Panc1 (cell line): ENCODE measurements at regions of chr5 and their contacts with region 1.

Region 1: DNA sequence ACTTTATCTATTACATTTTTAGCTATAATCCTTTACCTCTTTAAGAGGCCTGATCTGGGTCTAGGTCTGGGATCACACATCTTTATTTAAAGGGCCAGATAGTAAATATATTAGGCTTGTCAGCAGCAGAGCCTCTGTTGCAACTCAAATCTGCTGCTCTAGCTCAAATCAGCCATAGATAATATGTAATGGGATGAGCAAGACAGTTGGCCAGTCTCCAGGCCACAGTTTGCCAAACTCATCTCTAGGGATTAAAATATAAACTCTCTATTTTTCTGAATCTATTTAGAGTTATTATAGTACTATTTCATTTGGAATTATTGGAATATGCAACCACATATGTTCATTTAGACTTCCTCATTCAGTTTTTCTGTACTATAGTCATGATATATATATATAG is 115.9 kb upstream of the MINAR2 start:
- DNase-seq: no peak
- ATAC-seq: no peak
- H3K4me3 ChIP-seq: no peak overlapping the region
- H3K27ac ChIP-seq: no peak overlapping the region
- H3K4me1 ChIP-seq: no peaks in the 10 kb centered on the region
- H3K27me3 ChIP-seq: no peaks in the 10 kb centered on the region
- CTCF ChIP-seq: no peak

Region 2: GRCh38 chr5:129541644-129542251 is 90.2 kb before region 1 on chr5:
- CTCF ChIA-PET with region 1: no interaction called
- POLR2A ChIA-PET with region 1: no interaction called
- in situ Hi-C with region 1: no loop called
- intact Hi-C with region 1: no loop called
- DNase-seq: no peak
- ATAC-seq: no peak
- H3K4me3 ChIP-seq: no peak overlapping the region
- H3K27ac ChIP-seq: no peak overlapping the region
- H3K4me1 ChIP-seq: no peaks in the 10 kb centered on the region
- H3K27me3 ChIP-seq: no peaks in the 10 kb centered on the region
- CTCF ChIP-seq: no peak; the same call in 1 of the 2 replicates

Region 3: DNA sequence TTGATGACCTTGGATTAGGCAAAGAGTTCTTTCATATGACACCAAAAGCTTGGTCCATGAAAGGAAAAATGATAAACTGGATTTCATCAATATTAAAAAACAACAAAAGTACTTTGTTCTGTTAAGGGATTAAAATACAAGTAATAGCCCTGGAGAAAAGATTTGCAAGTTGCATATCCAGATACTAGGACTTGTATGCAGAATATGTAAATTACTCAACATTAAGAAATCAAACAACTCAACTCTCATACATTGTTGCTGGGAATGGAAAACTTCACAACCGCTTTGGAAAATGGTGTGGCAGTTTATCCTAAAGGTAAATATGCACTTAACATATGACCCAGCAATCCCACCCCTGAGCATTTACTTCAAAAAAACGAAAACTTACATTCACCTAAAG is 59.9 kb before region 1 on chr5:
- CTCF ChIA-PET with region 1: interaction called, 11 read pairs
- POLR2A ChIA-PET with region 1: no interaction called
- in situ Hi-C with region 1: no loop called
- intact Hi-C with region 1: no loop called
- DNase-seq: no peak
- ATAC-seq: no peak
- H3K4me3 ChIP-seq: no peak overlapping the region
- H3K27ac ChIP-seq: no peak overlapping the region
- H3K4me1 ChIP-seq: no peaks in the 10 kb centered on the region
- H3K27me3 ChIP-seq: no peaks in the 10 kb centered on the region
- CTCF ChIP-seq: no peak